Naive thymus-derived CD4-positive, alpha-beta T cell (primary cell): ENCODE measurements at regions of chr9 and their contacts with region 1.

Region 1: DNA sequence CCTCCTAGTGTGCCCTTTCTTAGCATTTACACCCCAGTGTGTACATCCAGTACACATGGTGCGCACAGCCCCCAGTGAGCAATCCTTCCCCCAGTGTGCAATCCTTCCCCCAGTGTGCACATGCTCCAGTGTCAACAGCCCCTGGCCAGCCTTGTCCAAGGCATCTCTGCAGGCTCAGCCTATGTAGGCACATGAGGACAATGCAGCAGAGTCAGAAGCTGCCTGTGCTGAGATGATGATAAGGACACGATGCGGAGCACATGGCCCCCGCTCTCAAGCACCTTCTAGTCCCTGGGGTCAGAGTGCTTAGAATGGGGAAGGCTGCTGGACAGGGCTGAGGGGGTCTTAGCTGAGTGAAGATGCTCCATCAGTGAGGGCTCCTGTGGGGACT is 69.8 kb downstream of the GADD45G start:
- DNase-seq: no peak
- ATAC-seq: no peak
- H3K4me3 ChIP-seq: no peak overlapping the region
- H3K4me3 Mint-ChIP-seq: no peak overlapping the region
- H3K27ac ChIP-seq: no peak overlapping the region
- H3K27ac Mint-ChIP-seq: no peak overlapping the region
- H3K4me1 ChIP-seq: no peaks in the 10 kb centered on the region
- H3K4me1 Mint-ChIP-seq: peaks cover 0 to 19% (median 0%) of the 10 kb centered on the region in 7 donors
- H3K27me3 ChIP-seq: no peaks in the 10 kb centered on the region
- H3K27me3 Mint-ChIP-seq: no peaks in the 10 kb centered on the region

Region 2: GRCh38 chr9:89661956-89662717 is 12.5 kb before region 1 on chr9:
- CTCF ChIA-PET with region 1: no interaction called
- POLR2A ChIA-PET with region 1: no interaction called
- intact Hi-C with region 1: loop called in 1 of 2 experiments (anchors 1 kb)
- DNase-seq: no peak
- ATAC-seq: peak; percentile 61
- H3K4me3 ChIP-seq: no peak overlapping the region
- H3K4me3 Mint-ChIP-seq: no peak overlapping the region
- H3K27ac ChIP-seq: no peak overlapping the region
- H3K27ac Mint-ChIP-seq: no peak overlapping the region
- H3K4me1 ChIP-seq: no peaks in the 10 kb centered on the region
- H3K4me1 Mint-ChIP-seq: peaks cover 0 to 39% (median 0%) of the 10 kb centered on the region in 7 donors
- H3K27me3 ChIP-seq: no peaks in the 10 kb centered on the region
- H3K27me3 Mint-ChIP-seq: peaks cover 0 to 17% (median 4%) of the 10 kb centered on the region in 5 donors